Dendritic cell treated with granulocyte-macrophage colony-stimulating factor and Interleukin-4, amounts not matched to agents 40 ng/mL and 50 ng/mL, for 4 days (primary cell): ENCODE measurements at regions of chr6 and their contacts with region 1.

Region 1: DNA sequence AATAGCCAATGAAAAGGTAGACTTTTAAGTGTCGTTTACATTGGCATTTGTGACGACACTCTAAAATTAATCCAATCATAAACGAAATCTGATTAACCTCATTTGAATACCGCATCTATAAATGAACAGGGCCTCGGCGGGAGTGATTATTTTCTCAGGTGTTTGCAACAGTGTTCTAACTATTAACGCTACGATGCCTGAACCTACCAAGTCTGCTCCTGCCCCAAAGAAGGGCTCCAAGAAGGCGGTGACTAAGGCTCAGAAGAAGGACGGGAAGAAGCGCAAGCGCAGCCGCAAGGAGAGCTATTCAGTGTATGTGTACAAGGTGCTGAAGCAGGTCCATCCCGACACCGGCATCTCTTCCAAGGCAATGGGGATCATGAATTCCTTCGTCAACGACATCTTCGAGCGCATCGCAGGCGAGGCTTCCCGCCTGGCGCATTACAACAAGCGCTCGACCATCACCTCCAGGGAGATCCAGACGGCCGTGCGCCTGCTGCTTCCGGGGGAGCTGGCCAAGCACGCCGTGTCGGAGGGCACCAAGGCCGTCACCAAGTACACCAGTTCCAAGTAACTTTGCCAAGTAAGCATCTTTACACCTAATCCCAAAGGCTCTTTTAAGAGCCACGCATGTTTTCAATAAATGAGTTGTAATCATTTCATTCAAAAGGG is 70.9 kb downstream of the HFE start:
- H3K4me3 Mint-ChIP-seq: peak overlapping the region; percentile 81
- H3K27ac Mint-ChIP-seq: peak overlapping the region; percentile 99
- H3K4me1 Mint-ChIP-seq: peaks cover 29% of the 10 kb centered on the region
- H3K27me3 Mint-ChIP-seq: no peaks in the 10 kb centered on the region

Region 2: GRCh38 chr6:26122793-26123674 is 35.1 kb before region 1 on chr6:
- intact Hi-C with region 1: loop called (anchors 1 kb)
- H3K4me3 Mint-ChIP-seq: peak overlapping the region; percentile 95
- H3K27ac Mint-ChIP-seq: peak overlapping the region; percentile 100
- H3K4me1 Mint-ChIP-seq: peaks cover 23% of the 10 kb centered on the region
- H3K27me3 Mint-ChIP-seq: no peaks in the 10 kb centered on the region

Region 3: GRCh38 chr6:26199057-26199772 is 41.1 kb after region 1 on chr6:
- intact Hi-C with region 1: loop called (anchors 1 kb)
- H3K4me3 Mint-ChIP-seq: peak overlapping the region; percentile 84
- H3K27ac Mint-ChIP-seq: peak overlapping the region; percentile 99
- H3K4me1 Mint-ChIP-seq: peaks cover 25% of the 10 kb centered on the region
- H3K27me3 Mint-ChIP-seq: no peaks in the 10 kb centered on the region